Naive thymus-derived CD4-positive, alpha-beta T cell (primary cell): ENCODE measurements at regions of chr5 and their contacts with region 1.

Region 1: GRCh38 chr5:170338933-170339779 is 41.6 kb upstream of the LCP2 start:
- DNase-seq: peak in 8 of 9 donors; percentile 53 to 75 (median 68)
- ATAC-seq: peak; percentile 90
- H3K4me3 ChIP-seq: no peak overlapping the region
- H3K4me3 Mint-ChIP-seq: peak overlapping the region in 3 of 10 donors; percentile 30 to 48 (median 42)
- H3K27ac ChIP-seq: peak overlapping the region; percentile 15
- H3K27ac Mint-ChIP-seq: peak overlapping the region in 8 of 9 donors; percentile 75 to 98 (median 86)
- H3K4me1 ChIP-seq: peaks cover 27 to 39% of the 10 kb centered on the region in 2 donors
- H3K4me1 Mint-ChIP-seq: peaks cover 0 to 48% (median 36%) of the 10 kb centered on the region in 7 donors
- H3K27me3 ChIP-seq: no peaks in the 10 kb centered on the region
- H3K27me3 Mint-ChIP-seq: peaks cover 0 to under 1% (median 0%) of the 10 kb centered on the region in 5 donors

Region 2: DNA sequence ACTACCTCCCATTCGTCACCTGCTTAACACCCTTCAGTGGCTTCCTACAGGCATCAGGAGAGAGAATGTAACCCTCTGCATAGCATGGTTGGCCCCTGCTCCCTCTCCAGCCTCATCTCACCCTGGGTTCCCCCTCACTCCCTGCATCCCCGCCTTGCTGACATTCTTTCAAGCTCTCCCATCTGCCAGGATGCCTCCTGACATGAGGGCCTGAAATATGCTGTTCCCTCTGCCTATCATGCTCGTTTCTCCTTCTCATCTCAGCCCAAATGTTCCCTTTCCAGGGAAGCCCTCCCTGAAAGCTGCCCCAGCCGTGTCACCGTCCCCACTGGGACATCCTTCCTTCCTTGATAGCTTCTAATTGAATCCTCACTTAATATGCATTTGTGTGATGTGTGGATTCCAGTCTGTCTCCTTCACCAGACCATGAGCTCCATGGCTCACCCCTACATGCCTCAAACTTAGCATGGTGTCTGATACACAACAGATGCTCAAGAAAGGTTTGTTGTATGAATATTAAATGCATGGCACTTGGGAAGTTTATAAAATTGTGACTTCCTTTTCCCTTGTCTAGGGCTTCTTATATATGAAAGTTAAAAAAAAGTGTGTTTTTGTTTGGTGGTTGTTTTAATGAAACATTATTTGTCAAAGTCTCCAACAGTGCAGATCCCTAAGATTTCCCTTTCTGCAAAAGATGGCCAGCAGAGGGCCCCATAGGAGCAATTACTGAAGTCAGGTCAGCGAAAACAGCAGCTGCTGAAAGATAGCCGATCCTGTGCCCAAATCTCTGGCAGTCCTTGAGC is 113.6 kb before region 1 on chr5:
- CTCF ChIA-PET with region 1: interaction called, 177 read pairs
- POLR2A ChIA-PET with region 1: interaction called, 13 read pairs
- intact Hi-C with region 1: loop called (anchors 1 kb)
- DNase-seq: peak; percentile 45 to 78 (median 69)
- ATAC-seq: peak; percentile 75
- H3K4me3 ChIP-seq: no peak overlapping the region
- H3K4me3 Mint-ChIP-seq: peak overlapping the region in 1 of 10 donors; percentile 15
- H3K27ac ChIP-seq: no peak overlapping the region
- H3K27ac Mint-ChIP-seq: peak overlapping the region in 3 of 9 donors; percentile 31 to 75 (median 61)
- H3K4me1 ChIP-seq: no peaks in the 10 kb centered on the region
- H3K4me1 Mint-ChIP-seq: peaks cover 0 to 11% (median 5%) of the 10 kb centered on the region in 7 donors
- H3K27me3 ChIP-seq: no peaks in the 10 kb centered on the region
- H3K27me3 Mint-ChIP-seq: no peaks in the 10 kb centered on the region

Region 3: DNA sequence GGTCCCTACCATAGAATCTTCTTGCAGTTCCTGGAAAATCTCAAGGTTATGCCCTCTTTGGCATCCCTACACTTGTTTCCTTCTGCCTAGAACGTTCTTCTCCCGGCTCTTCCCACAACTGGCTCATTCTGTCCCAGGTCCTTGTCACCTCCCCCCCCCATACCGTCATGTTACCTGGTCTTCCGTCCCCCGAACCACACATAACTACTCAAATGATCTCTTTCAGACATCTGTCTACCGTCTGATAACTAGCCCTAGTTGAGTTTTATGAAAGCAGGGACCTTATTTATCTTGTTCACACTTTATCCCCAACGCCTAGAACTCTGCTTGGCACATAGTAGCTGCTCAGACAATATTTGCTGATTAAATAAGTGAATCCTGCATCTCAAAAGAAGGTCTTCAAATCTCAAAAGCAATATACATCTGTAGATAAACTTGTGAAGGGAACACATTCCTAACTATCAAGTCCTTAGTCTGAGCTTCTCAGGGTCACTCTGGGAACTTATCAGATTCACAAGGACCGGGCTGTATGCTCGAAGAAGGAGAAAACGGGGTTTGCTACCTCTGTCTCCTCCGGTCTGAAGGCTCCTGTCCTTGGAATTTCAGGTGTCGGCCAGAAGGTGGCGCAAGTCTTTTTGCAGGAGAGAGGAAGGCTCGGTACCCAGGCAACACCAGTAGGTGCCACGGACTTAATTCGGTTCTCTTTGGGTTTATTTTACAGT is 71.6 kb before region 1 on chr5:
- CTCF ChIA-PET with region 1: interaction called, 278 read pairs
- POLR2A ChIA-PET with region 1: interaction called, 132 read pairs
- intact Hi-C with region 1: loop called (anchors 1 kb)
- DNase-seq: peak; percentile 62 to 82 (median 77)
- ATAC-seq: peak; percentile 75
- H3K4me3 ChIP-seq: no peak overlapping the region
- H3K4me3 Mint-ChIP-seq: peak overlapping the region; percentile 63 to 81 (median 73)
- H3K27ac ChIP-seq: peak overlapping the region; percentile 66
- H3K27ac Mint-ChIP-seq: peak overlapping the region; percentile 81 to 98 (median 93)
- H3K4me1 ChIP-seq: peaks cover 69 to 75% of the 10 kb centered on the region in 2 donors
- H3K4me1 Mint-ChIP-seq: peaks cover 62 to 100% (median 94%) of the 10 kb centered on the region in 7 donors
- H3K27me3 ChIP-seq: no peaks in the 10 kb centered on the region
- H3K27me3 Mint-ChIP-seq: no peaks in the 10 kb centered on the region

Region 4: DNA sequence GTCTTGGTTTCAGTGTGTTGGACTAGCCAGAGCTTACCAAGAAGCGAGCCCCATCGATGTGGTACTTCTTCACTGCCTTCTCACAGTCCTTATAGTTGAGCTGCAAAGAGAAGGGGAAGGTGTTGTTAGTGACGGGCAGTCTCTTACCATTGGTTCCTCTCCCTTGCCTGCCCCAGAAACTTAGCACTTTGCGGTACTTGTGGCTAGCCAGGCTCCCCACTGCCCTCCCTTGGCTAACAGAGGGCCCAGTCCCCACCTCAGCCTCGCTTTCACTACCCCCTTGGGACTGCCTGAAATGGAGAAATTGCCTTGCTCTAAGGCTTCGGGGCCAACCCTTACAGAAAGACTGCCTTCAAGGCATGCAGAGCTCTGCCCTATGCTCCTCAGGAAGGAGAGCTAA is 45.9 kb before region 1 on chr5:
- CTCF ChIA-PET with region 1: interaction called, 120 read pairs
- POLR2A ChIA-PET with region 1: interaction called, 391 read pairs
- intact Hi-C with region 1: no loop called
- DNase-seq: peak in 2 of 9 donors; percentile 18 to 60
- ATAC-seq: peak; percentile 75
- H3K4me3 ChIP-seq: peak overlapping the region; percentile 92
- H3K4me3 Mint-ChIP-seq: peak overlapping the region; percentile 92 to 100 (median 98)
- H3K27ac ChIP-seq: peak overlapping the region; percentile 88
- H3K27ac Mint-ChIP-seq: peak overlapping the region; percentile 67 to 98 (median 95)
- H3K4me1 ChIP-seq: peaks cover 58 to 66% of the 10 kb centered on the region in 2 donors
- H3K4me1 Mint-ChIP-seq: peaks cover 62 to 75% (median 71%) of the 10 kb centered on the region in 7 donors
- H3K27me3 ChIP-seq: no peaks in the 10 kb centered on the region
- H3K27me3 Mint-ChIP-seq: no peaks in the 10 kb centered on the region

Region 5: GRCh38 chr5:170420780-170421412 is 81.7 kb after region 1 on chr5:
- CTCF ChIA-PET with region 1: interaction called, 4 read pairs
- POLR2A ChIA-PET with region 1: interaction called, 3 read pairs
- intact Hi-C with region 1: loop called (anchors 1 to 2 kb)
- DNase-seq: peak; percentile 18 to 66 (median 48)
- ATAC-seq: peak; percentile 80
- H3K4me3 ChIP-seq: no peak overlapping the region
- H3K4me3 Mint-ChIP-seq: no peak overlapping the region
- H3K27ac ChIP-seq: no peak overlapping the region
- H3K27ac Mint-ChIP-seq: peak overlapping the region in 1 of 9 donors; percentile 1
- H3K4me1 ChIP-seq: peaks cover 10 to 19% of the 10 kb centered on the region in 2 donors
- H3K4me1 Mint-ChIP-seq: peaks cover 3 to 34% (median 30%) of the 10 kb centered on the region in 7 donors
- H3K27me3 ChIP-seq: no peaks in the 10 kb centered on the region
- H3K27me3 Mint-ChIP-seq: peaks cover 0 to 35% (median 0%) of the 10 kb centered on the region in 5 donors